ENCODE measurements at regions of chr10 and their contacts with region 1.

Region 1: DNA sequence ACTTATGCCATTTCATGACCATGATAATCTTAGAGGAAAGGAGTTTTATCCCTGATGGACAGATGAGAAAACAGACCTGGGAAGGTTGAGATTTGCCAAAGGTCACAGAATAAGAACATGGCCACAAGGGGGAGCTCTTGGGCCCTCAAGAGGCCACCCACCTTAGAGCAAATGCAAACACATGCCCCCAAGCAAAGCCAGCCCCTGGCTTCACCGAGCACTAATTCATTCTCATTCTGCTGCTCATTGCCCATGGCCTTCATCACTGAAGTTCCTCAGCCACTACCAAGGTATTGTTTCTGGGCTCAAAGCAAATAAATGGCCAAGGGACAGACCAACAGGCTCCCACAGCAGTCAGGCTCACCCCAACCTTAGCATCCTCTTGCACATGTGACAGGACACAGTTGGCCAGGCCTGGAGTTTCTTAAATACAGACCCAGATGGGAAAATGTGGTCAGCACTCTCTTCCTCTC is 44.2 kb downstream of the PDLIM1 start:
- DNase-seq: peak; percentile 16 to 75 (median 34)
- ATAC-seq: no peak
- H3K4me3 ChIP-seq: no peak overlapping the region
- H3K4me3 Mint-ChIP-seq: no peak overlapping the region
- H3K27ac ChIP-seq: no peak overlapping the region
- H3K27ac Mint-ChIP-seq: no peak overlapping the region
- H3K4me1 ChIP-seq: no peaks in the 10 kb centered on the region
- H3K4me1 Mint-ChIP-seq: no peaks in the 10 kb centered on the region
- H3K27me3 ChIP-seq: no peaks in the 10 kb centered on the region
- H3K27me3 Mint-ChIP-seq: peaks cover 11% of the 10 kb centered on the region
- CTCF ChIP-seq: peak; percentile 58

Region 2: DNA sequence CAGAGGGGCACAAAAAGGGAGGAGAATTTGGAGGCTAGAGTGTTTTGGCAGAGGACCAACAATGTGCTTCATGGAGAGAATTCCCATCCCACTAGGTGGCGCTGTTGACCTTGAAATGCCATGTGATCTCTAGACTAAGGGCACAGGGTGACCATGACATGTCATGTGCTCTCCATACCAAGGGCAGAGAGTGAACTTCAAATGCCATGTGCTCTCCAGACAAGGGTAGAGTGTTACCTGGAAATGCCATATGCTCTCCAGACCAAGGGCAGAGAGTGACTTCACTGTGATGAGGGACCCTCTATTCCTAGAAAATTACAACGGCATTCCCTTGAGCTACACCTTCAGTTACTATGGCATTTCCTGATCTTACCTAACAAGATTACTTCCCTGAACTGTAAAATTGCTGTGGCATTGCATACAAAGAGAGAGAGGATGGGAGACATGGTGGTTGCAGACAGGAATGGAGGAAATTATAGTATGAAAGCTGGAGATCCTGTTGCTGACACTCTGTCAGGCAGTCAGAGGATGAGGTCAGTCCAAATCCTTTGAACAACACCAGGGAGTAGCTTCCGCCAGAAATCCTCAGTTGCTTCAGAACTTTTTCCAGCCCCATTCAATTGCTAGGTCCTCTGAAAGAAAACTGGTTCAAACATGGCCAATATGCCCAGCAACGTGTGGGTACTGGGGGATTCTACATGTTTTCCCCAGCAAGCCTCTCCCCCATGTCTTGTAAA is 113.4 kb before region 1 on chr10:
- CTCF ChIA-PET with region 1: no interaction called
- POLR2A ChIA-PET with region 1: no interaction called
- intact Hi-C with region 1: loop called in 1 of 2 experiments (anchors 5 kb)
- DNase-seq: peak; percentile 18 to 78 (median 44)
- ATAC-seq: no peak
- H3K4me3 ChIP-seq: no peak overlapping the region
- H3K4me3 Mint-ChIP-seq: no peak overlapping the region
- H3K27ac ChIP-seq: no peak overlapping the region
- H3K27ac Mint-ChIP-seq: no peak overlapping the region
- H3K4me1 ChIP-seq: no peaks in the 10 kb centered on the region
- H3K4me1 Mint-ChIP-seq: no peaks in the 10 kb centered on the region
- H3K27me3 ChIP-seq: no peaks in the 10 kb centered on the region
- H3K27me3 Mint-ChIP-seq: no peaks in the 10 kb centered on the region
- CTCF ChIP-seq: peak; percentile 47

Region 3: GRCh38 chr10:95183271-95184230 is 63.1 kb before region 1 on chr10:
- CTCF ChIA-PET with region 1: no interaction called
- POLR2A ChIA-PET with region 1: no interaction called
- intact Hi-C with region 1: loop called in 1 of 2 experiments (anchors 5 kb)
- DNase-seq: peak; percentile 9 to 77 (median 52)
- ATAC-seq: peak; percentile 76
- H3K4me3 ChIP-seq: peak overlapping the region; percentile 52
- H3K4me3 Mint-ChIP-seq: peak overlapping the region; percentile 75
- H3K27ac ChIP-seq: no peak overlapping the region
- H3K27ac Mint-ChIP-seq: no peak overlapping the region
- H3K4me1 ChIP-seq: peaks cover 5% of the 10 kb centered on the region
- H3K4me1 Mint-ChIP-seq: peaks cover 8% of the 10 kb centered on the region
- H3K27me3 ChIP-seq: peaks cover 4 to 8% of the 10 kb centered on the region in 2 experiments
- H3K27me3 Mint-ChIP-seq: peaks cover 25% of the 10 kb centered on the region
- CTCF ChIP-seq: peak; percentile 70

Region 4: GRCh38 chr10:95384011-95384704 is 137.5 kb after region 1 on chr10:
- CTCF ChIA-PET with region 1: no interaction called
- POLR2A ChIA-PET with region 1: no interaction called
- intact Hi-C with region 1: no loop called
- DNase-seq: no peak
- ATAC-seq: no peak
- H3K4me3 ChIP-seq: no peak overlapping the region
- H3K4me3 Mint-ChIP-seq: no peak overlapping the region
- H3K27ac ChIP-seq: no peak overlapping the region
- H3K27ac Mint-ChIP-seq: no peak overlapping the region
- H3K4me1 ChIP-seq: no peaks in the 10 kb centered on the region
- H3K4me1 Mint-ChIP-seq: no peaks in the 10 kb centered on the region
- H3K27me3 ChIP-seq: no peaks in the 10 kb centered on the region
- H3K27me3 Mint-ChIP-seq: no peaks in the 10 kb centered on the region
- CTCF ChIP-seq: no peak